Activated CD8-positive, alpha-beta T cell treated with anti-CD3 and anti-CD28 coated beads, Interleukin-2, amount 10 ng/mL, durations not matched to agents 7 days and 5 days (primary cell): ENCODE measurements at regions of chr1 and their contacts with region 1.

Region 1: DNA sequence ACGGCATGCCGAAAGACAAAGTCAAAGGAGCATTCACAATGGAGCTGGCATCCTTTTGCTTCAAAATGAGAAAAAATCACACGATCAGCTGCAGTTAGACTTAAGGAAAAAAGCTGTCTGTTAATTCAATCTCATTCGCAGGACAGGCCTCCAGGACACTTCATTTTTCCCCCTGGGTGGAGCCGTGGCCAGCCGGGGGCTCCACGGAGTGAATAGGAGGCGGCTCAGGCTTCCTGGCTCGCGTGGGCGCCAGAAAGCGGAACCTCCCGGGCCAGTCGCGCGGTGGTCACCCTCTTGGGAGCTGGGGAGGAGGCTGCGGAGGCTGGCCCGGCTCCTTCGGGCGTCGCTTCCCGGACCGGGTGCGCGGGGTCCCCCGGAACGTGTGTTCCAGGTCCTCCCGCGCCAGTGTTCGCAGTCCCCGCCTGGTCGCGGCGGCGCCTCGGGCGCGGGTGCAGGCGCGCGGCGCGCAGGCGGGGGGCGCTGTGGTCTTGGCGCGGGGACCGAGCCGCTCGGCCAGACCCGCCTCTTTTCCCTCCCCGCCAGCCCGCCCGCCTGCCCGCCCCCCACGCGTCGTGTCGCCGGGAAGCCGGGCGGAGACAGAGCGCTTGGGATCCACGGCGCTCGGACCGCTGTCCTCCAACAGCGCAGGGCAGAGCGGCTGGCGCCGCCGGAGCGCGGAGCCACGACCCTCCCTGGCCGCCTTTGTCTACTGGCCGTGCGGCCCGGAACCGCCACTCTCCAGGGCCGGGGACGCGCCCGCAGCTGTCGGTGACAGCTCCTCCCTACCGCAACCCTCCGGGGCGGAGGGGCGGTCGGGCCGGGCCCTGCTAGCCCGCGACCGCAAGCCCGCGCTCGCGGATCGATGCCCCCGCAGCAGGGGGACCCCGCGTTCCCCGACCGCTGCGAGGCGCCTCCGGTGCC is at the start of gene RHOU:
- DNase-seq: peak; percentile 76
- ATAC-seq: peak; percentile 88
- H3K4me3 Mint-ChIP-seq: peak within 1 kb of the TSS; percentile 85
- H3K27ac Mint-ChIP-seq: peak within 1 kb of the TSS; percentile 75
- H3K4me1 Mint-ChIP-seq: peaks cover 31% of the 10 kb centered on the region
- H3K27me3 Mint-ChIP-seq: peaks cover 23% of the 10 kb centered on the region
- total RNA-seq, gene RHOU: 9.5 to 9.7 TPM

Region 2: DNA sequence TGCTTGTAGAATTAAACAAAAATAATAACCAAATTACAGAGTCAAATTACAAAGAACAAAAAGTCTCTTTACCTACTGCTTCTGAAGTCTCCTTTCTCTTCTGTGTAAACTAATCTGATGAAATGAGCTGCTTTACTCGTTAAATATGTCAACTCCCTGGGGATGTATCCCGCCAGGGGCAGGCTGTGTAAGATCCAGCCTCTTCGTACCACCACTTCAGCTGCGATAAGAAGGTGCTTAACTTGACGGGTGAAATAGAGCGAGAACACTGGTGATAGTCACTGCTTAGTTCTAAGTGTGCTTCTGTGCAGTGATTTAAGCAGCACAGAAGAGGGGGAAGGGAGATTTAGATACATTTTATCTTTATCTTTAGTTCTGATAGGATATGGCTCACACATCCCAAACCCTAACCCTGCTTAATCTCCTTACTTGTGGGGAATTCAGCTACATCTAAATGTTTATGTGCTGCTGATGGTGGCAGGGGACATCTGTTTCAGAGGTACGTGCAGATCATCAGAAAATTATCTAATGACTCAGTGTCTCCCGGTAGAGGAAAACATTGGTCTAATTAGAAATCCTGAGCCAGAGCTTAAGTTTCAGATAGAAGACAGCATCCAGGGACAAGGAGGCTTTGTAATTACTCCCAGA is 46.1 kb after region 1 on chr1:
- CTCF ChIA-PET with region 1: no interaction called
- POLR2A ChIA-PET with region 1: no interaction called
- DNase-seq: no peak
- ATAC-seq: no peak
- H3K4me3 Mint-ChIP-seq: no peak overlapping the region
- H3K27ac Mint-ChIP-seq: no peak overlapping the region
- H3K4me1 Mint-ChIP-seq: peaks cover 9% of the 10 kb centered on the region
- H3K27me3 Mint-ChIP-seq: peaks cover 6% of the 10 kb centered on the region

Region 3: GRCh38 chr1:228794173-228794572 is 59.0 kb after region 1 on chr1:
- CTCF ChIA-PET with region 1: interaction called, 36 read pairs
- POLR2A ChIA-PET with region 1: interaction called, 3 read pairs
- DNase-seq: peak; percentile 66
- ATAC-seq: peak; percentile 76
- H3K4me3 Mint-ChIP-seq: no peak overlapping the region
- H3K27ac Mint-ChIP-seq: no peak overlapping the region
- H3K4me1 Mint-ChIP-seq: peaks cover 36% of the 10 kb centered on the region
- H3K27me3 Mint-ChIP-seq: no peaks in the 10 kb centered on the region

Region 4: GRCh38 chr1:228810878-228811711 is 76.0 kb after region 1 on chr1:
- CTCF ChIA-PET with region 1: interaction called, 10 read pairs
- POLR2A ChIA-PET with region 1: no interaction called
- DNase-seq: peak; percentile 39
- ATAC-seq: peak; percentile 60
- H3K4me3 Mint-ChIP-seq: no peak overlapping the region
- H3K27ac Mint-ChIP-seq: peak overlapping the region; percentile 86
- H3K4me1 Mint-ChIP-seq: peaks cover 62% of the 10 kb centered on the region
- H3K27me3 Mint-ChIP-seq: no peaks in the 10 kb centered on the region

Region 5: DNA sequence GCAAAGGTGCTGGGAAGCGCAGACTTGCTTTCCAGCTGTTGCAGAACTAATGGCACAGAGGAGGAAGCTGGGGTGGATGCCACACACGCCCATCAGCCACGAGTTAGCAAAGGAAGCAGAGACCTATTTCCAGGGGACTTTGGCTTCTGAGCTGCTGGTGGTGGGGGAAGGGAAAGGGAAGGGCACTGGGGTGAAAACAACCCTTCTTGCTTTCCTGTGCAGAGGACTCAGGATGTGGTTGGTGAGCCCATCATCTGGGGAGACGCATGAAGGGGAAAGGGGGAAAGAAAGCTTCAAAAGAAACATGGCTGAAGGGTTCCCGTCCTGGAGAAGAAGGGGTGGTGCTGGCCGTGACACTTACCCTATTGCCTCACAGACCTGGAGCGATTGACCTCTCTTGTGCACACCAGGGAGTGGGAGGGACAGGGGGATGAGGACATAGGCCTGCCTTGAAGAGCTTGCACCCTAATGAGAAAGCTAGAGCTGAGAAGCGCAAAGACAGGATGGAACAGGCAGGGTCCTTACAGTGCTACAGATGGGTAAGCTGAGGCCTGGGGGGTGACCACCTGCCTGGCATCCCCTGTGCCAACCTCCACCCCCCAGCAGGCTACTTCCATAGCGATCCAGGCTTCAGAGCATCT is 395.0 kb after region 1 on chr1:
- CTCF ChIA-PET with region 1: interaction called, 13 read pairs
- POLR2A ChIA-PET with region 1: no interaction called
- DNase-seq: peak; percentile 58
- ATAC-seq: peak; percentile 40
- H3K4me3 Mint-ChIP-seq: peak overlapping the region; percentile 34
- H3K27ac Mint-ChIP-seq: peak overlapping the region; percentile 46
- H3K4me1 Mint-ChIP-seq: peaks cover 62% of the 10 kb centered on the region
- H3K27me3 Mint-ChIP-seq: peaks cover 9% of the 10 kb centered on the region